Heart left ventricle (tissue), 16 donors: ENCODE measurements at regions of chr15 and their contacts with region 1.

Region 1: GRCh38 chr15:68644077-68644904 is 65.5 kb downstream of the CORO2B start:
- DNase-seq: no peak
- ATAC-seq: no peak
- H3K4me3 ChIP-seq: no peak overlapping the region
- H3K27ac ChIP-seq: no peak overlapping the region
- H3K4me1 ChIP-seq: peaks cover 0 to 25% (median 17%) of the 10 kb centered on the region in 12 donors
- H3K27me3 ChIP-seq: no peaks in the 10 kb centered on the region
- CTCF ChIP-seq: peak in 4 of 12 donors; percentile 8 to 33 (median 20)
- POLR2A ChIP-seq: no peak

Region 2: GRCh38 chr15:68447209-68447608 is 197.1 kb before region 1 on chr15:
- intact Hi-C with region 1: no loop called
- DNase-seq: no peak
- ATAC-seq: no peak
- H3K4me3 ChIP-seq: no peak overlapping the region
- H3K27ac ChIP-seq: no peak overlapping the region
- H3K4me1 ChIP-seq: peaks cover 0 to 18% (median 3%) of the 10 kb centered on the region in 12 donors
- H3K27me3 ChIP-seq: peaks cover 0 to 9% (median 0%) of the 10 kb centered on the region in 9 donors
- CTCF ChIP-seq: no peak
- POLR2A ChIP-seq: no peak

Region 3: DNA sequence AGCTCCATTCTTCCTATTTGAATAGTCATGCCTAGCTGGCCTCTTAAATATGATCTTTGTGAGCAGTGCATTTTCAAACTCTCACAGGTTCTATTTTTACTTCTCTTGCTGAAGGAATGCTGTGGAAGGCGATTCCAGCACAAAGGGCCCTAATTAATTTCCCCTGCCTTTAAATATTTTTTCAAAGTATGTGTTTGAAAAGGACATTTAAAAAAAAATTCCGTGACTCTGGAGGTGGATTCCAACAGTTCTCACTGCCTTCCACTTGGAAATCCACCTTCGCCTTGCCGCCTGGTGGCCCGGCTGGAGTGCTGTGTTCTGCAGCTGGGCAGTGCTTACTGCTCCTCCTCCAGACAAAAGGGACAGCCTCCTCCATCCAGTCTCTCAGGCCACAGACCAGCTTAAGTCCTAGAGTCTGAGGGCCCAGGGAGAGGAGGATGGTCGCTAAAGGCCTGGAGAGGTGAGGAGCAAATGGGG is 127.0 kb before region 1 on chr15:
- intact Hi-C with region 1: no loop called
- DNase-seq: peak in 3 of 5 donors; percentile 60 to 72 (median 60)
- ATAC-seq: peak; percentile 63 to 90 (median 86)
- H3K4me3 ChIP-seq: no peak overlapping the region
- H3K27ac ChIP-seq: peak overlapping the region in 11 of 12 donors; percentile 13 to 68 (median 41)
- H3K4me1 ChIP-seq: peaks cover 0 to 26% (median 15%) of the 10 kb centered on the region in 12 donors
- H3K27me3 ChIP-seq: no peaks in the 10 kb centered on the region
- CTCF ChIP-seq: peak in 10 of 12 donors; percentile 6 to 45 (median 32)
- POLR2A ChIP-seq: no peak

Region 4: DNA sequence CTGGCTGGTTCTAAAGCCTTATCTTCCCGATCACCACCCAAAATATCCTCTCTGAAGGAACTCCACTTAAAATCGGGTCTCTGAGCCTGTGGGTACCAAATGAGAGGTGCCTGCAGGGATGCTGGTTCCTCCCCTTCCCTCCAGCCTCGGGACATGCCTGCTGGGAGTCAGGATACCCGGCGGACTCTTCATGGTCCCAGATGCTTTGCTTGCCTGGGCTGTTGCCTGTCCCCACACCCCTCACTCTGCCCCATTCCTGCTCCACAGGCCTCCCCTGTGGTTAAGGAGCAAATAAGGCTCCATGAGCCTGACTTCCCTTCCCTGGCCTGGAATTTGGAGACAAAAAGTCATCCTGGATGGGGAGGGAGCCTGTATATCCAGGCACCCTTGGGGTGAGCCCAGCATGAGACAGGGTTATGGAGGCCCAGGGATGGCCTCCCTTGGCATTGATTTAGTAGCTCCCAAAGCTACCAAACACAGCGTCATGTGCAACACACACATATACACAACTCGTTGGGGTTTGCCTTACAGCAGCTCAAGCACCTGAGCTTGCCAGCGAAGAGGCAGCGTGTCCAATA is 77.8 kb before region 1 on chr15:
- intact Hi-C with region 1: loop called in 1 of 10 experiments (anchors 5 kb)
- DNase-seq: no peak
- ATAC-seq: no peak
- H3K4me3 ChIP-seq: no peak overlapping the region
- H3K27ac ChIP-seq: no peak overlapping the region
- H3K4me1 ChIP-seq: peaks cover 0 to 13% (median 0%) of the 10 kb centered on the region in 12 donors
- H3K27me3 ChIP-seq: no peaks in the 10 kb centered on the region
- CTCF ChIP-seq: no peak
- POLR2A ChIP-seq: no peak

Region 5: DNA sequence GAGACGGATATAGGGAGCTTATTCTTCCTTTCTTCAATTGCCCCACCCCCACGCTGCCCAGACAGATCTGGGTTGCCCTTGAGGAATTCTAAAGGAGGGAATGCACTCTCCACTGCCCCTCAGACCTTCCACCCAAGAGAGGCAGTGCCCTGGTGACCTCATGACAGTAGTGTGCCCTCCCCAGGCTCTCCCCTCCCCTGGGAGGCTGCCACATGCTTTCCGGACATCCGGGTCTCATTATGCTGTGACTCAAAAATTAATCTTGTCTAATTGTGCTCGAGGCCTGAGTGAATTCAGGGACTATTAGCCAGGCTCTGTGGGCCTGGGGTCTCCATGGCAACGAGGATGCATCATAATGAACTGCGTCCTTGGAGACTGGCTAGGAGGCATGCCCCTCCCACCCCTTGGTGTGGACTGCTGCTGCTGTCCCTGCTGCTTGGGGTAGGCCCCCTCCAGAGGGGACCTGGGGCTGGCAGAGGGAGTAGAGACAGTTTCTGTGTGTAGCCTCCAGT is 44.7 kb before region 1 on chr15:
- intact Hi-C with region 1: loop called in 1 of 10 experiments (anchors 5 kb)
- DNase-seq: peak in 2 of 5 donors; percentile 23 to 59
- ATAC-seq: peak in 1 of 4 donors; percentile 38
- H3K4me3 ChIP-seq: no peak overlapping the region
- H3K27ac ChIP-seq: peak overlapping the region in 3 of 12 donors; percentile 19 to 58 (median 28)
- H3K4me1 ChIP-seq: peaks cover 0 to 76% (median 55%) of the 10 kb centered on the region in 12 donors
- H3K27me3 ChIP-seq: no peaks in the 10 kb centered on the region
- CTCF ChIP-seq: no peak
- POLR2A ChIP-seq: no peak

Region 6: GRCh38 chr15:68608206-68608843 is 36.0 kb before region 1 on chr15:
- intact Hi-C with region 1: loop called in 1 of 10 experiments (anchors 2 kb)
- DNase-seq: peak; percentile 81 to 94 (median 91)
- ATAC-seq: peak; percentile 76 to 87 (median 85)
- H3K4me3 ChIP-seq: no peak overlapping the region
- H3K27ac ChIP-seq: peak overlapping the region; percentile 33 to 86 (median 68)
- H3K4me1 ChIP-seq: peaks cover 4 to 59% (median 35%) of the 10 kb centered on the region in 12 donors
- H3K27me3 ChIP-seq: no peaks in the 10 kb centered on the region
- CTCF ChIP-seq: no peak
- POLR2A ChIP-seq: no peak

Region 7: DNA sequence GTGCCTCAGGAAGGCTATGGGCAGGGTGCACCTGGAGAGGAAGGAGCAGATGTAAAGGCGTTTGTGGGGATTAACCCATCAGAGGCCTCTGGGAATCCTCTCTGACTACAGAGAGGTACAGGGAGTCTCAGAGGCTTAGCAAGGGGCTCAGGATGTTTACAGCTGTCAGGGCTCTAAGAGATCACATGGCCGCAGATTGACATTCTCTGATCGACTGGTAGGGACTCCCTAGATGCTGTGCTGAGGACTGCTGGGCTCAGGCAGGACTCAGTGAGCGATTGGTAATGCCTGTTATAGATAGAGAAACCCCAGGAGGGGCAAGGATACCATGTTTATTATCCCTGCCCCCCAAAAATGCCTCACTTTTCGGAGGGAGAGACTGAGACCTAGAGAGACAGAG is 38.0 kb after region 1 on chr15:
- intact Hi-C with region 1: no loop called
- DNase-seq: no peak
- ATAC-seq: no peak
- H3K4me3 ChIP-seq: no peak overlapping the region
- H3K27ac ChIP-seq: no peak overlapping the region
- H3K4me1 ChIP-seq: peaks cover 0 to 25% (median 0%) of the 10 kb centered on the region in 12 donors
- H3K27me3 ChIP-seq: no peaks in the 10 kb centered on the region
- CTCF ChIP-seq: no peak
- POLR2A ChIP-seq: no peak